CD14-positive monocyte (primary cell): ENCODE measurements at regions of chr12 and their contacts with region 1.

Region 1: GRCh38 chr12:120086801-120087621 is 29.5 kb downstream of the RAB35 start:
- DNase-seq: peak; percentile 99 to 100 (median 100)
- H3K4me3 ChIP-seq: peak overlapping the region; percentile 32 to 57 (median 33)
- H3K4me3 Mint-ChIP-seq: peak overlapping the region; percentile 73 to 87
- H3K27ac ChIP-seq: peak overlapping the region; percentile 16 to 44
- H3K27ac Mint-ChIP-seq: peak overlapping the region; percentile 54 to 90 (median 81)
- H3K4me1 ChIP-seq: peaks cover 15% of the 10 kb centered on the region in 2 donors
- H3K4me1 Mint-ChIP-seq: peaks cover 14% of the 10 kb centered on the region
- H3K27me3 ChIP-seq: no peaks in the 10 kb centered on the region
- H3K27me3 Mint-ChIP-seq: peaks cover 7 to 23% (median 15%) of the 10 kb centered on the region in 3 donors
- CTCF ChIP-seq: peak; percentile 95

Region 2: DNA sequence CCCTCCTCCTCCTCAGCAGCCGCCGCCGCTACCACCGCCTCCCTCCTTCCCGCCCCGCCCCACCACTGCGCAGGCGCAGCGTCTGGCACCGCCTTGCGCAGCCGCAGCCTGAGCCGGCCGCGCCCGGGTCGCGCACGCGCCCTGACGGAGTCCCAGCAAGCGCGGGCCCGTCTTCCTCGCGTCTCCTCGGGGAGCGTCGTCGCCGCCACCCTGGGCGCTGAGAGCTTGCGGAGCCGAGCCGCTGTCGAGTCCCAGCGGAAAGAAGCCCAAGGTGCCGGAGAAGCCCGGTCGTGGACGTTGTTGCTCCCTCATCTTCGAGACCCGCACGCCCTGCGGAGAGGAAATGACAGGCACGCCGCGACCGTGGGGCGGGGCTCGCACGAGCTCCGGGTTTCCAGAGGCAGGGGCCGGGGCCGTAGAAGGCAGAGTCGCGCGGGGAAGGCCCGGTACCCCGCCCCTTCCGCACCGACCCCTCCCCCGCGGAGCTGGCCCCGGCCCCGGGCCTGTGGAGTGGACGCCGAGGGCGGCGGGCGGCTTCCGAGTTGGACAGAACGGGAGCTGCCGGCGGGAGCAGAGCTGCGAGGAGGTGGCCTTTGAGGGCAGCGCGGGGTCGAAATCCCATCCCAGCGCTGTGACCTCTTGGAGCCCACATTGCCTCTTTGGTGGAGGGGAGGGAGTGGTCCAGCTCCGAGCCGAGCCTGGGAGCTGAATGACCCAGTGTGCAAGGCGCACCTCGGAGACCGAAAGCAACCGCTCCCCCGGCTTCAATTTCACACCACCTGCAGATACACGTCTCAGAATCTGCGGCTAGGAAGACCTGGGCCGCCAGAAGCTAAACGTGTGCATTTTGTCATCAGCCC is 30.0 kb after region 1 on chr12:
- intact Hi-C with region 1: loop called in 1 of 2 experiments (anchors 5 kb)
- DNase-seq: peak; percentile 92 to 94 (median 92)
- H3K4me3 ChIP-seq: peak overlapping the region; percentile 65 to 91 (median 75)
- H3K4me3 Mint-ChIP-seq: peak overlapping the region; percentile 85 to 93
- H3K27ac ChIP-seq: peak overlapping the region; percentile 88 to 91
- H3K27ac Mint-ChIP-seq: peak overlapping the region; percentile 84 to 95 (median 91)
- H3K4me1 ChIP-seq: peaks cover 49 to 65% of the 10 kb centered on the region in 2 donors
- H3K4me1 Mint-ChIP-seq: peaks cover 73% of the 10 kb centered on the region
- H3K27me3 ChIP-seq: no peaks in the 10 kb centered on the region
- H3K27me3 Mint-ChIP-seq: no peaks in the 10 kb centered on the region
- CTCF ChIP-seq: no peak